ENCODE measurements at regions of chr17 and their contacts with region 1.

Region 1: GRCh38 chr17:11712445-11712844 is 114.2 kb downstream of the DNAH9 start:
- DNase-seq: no peak
- H3K4me3 ChIP-seq: no peak overlapping the region
- H3K27ac ChIP-seq: no peak overlapping the region
- H3K4me1 ChIP-seq: no peaks in the 10 kb centered on the region
- H3K27me3 ChIP-seq: no peaks in the 10 kb centered on the region
- CTCF ChIP-seq: no peak

Region 2: DNA sequence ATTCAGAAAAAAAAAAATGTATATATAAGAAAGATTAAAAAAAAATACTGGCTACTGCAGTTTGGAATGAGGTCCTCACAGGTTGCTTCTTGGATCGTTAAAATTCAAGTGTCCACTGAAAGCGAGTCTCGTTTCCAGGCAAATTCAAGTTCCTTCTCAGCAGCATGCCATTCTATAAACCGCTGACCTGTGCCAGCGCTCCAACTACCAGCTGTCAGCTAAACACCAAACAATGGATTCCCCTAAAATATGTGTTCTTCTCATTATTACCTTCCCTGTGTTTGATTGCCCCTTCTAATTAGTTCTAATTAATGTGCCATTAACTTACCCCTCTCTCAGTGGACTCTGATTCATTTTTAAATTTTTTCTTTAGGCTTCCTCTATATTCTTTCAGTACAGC is 21.8 kb before region 1 on chr17:
- CTCF ChIA-PET with region 1: no interaction called
- dilution Hi-C with region 1: no loop called
- in situ Hi-C with region 1: no loop called
- intact Hi-C with region 1: no loop called
- DNase-seq: no peak
- H3K4me3 ChIP-seq: no peak overlapping the region
- H3K27ac ChIP-seq: no peak overlapping the region
- H3K4me1 ChIP-seq: no peaks in the 10 kb centered on the region
- H3K27me3 ChIP-seq: no peaks in the 10 kb centered on the region
- CTCF ChIP-seq: no peak

Region 3: DNA sequence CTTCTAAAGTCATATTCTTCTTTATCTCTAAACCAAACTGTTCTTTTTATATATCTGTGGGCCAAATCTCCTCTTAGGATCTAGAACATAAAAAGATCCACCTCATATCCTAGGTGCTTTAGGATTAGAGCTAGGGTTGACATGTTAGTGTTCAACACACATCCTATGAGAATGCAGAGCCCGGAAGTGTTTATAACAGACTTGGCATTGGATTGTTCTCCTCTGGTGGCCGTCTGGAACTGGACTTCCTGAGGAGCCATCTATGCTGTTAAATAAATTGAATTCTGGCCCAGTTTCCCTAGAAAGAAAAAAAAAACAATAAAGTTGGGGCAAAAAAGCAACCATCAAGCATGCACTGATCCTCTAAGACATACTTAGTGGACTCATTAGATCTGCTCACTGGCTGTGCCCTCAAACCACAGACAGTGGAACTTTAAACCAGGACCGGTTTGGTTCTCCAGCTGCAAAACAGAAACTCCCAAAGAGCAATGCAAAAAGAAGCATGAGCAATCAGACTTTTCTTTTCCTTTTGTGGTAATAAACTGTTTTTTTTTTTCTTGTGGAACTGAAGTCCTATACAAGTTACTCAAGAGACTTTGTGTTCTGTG is 102.3 kb after region 1 on chr17:
- CTCF ChIA-PET with region 1: interaction called, 25 read pairs
- dilution Hi-C with region 1: no loop called
- in situ Hi-C with region 1: no loop called
- intact Hi-C with region 1: no loop called
- DNase-seq: no peak
- H3K4me3 ChIP-seq: no peak overlapping the region
- H3K27ac ChIP-seq: no peak overlapping the region
- H3K4me1 ChIP-seq: no peaks in the 10 kb centered on the region
- H3K27me3 ChIP-seq: no peaks in the 10 kb centered on the region
- CTCF ChIP-seq: no peak

Measured in mammary epithelial cell (primary cell).